Calu3 (cell line): ENCODE measurements at regions of chr14 and their contacts with region 1.

Region 1: DNA sequence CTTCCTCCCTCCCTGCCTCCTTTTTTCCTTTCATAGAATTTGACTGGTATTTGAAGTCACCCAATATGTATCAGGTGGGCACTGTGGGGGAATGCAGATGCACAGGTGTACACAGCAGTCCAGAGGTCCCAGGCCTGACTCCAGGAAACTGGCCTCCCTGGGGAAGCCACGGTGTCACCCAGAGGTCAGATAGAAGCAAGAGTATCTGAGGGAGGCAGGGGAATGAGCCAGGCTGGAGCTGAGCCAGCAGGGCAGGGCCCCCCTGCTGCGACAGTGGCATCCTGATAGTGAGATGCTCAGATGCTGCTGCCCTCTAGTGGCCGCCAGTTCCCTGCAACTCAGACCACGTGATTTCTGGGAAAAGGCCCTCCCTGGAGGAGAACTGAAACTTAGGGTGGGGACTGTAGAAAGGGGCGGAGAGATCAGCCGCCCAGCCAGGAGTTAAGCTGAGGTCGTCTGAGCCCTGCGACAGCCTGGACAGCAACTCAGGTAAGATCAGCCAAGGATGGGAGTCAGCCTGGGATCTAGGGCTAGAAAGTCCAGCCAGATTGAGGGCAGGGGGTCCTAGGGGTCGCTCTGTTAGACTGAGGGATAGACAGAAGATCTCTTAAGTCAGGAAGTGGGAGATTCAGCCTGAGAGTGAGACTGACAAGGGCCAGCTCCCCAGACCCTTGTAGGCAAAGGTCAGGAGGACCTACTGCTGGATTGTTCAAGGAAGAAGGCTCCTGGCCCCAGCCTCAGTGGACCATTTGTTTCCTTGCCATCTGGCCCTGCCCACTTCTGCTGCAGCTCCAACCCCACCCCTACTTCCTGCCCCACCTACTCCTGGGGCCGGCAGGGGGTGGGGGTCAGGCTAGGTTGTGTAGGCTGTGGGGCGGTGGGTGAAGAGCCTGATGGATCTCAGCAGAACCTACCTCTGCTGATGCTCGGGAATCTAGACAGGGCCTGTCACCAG is at the start of gene IRF9:
- DNase-seq: peak; percentile 96
- H3K4me3 Mint-ChIP-seq: peak within 1 kb of the TSS; percentile 76
- H3K27ac Mint-ChIP-seq: peak within 1 kb of the TSS; percentile 86
- H3K4me1 Mint-ChIP-seq: peaks cover 15% of the 10 kb centered on the region
- H3K27me3 Mint-ChIP-seq: no peaks in the 10 kb centered on the region
- CTCF ChIP-seq: peak; percentile 75
- total RNA-seq, gene IRF9: 124 and 184 TPM in 2 replicates

Region 2: DNA sequence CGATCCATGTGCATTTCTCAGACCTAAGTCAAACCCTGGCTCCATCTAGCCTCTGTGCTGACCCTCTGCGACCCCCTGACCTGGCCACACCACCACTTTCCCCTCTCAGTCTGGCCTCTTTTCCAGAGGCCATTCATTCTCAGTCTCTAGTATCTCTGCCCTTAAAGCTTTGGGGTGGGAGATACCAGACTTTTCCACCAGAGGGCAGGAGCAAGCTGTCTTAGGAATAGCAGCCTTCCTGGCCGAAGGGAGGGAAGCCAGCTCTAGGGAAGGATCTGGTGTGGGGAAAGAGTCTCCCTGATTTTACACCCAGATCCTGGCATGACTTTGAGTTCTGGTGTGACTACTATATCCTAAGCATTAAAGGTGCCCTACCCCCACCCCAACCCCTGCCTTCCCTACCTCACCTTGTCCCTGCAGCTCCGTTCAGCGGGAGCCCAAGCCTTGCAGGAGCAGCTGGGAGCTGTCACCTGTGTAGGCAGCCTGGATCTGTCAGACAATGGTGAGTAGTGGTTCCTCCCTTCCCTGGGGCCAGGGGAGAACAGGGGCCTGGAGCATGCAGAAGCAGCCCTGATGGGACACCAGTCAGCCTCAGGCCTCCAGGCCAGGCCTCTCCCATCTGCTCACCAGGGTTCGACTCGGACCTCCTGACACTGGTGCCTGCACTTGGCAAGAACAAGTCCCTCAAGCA is 102.7 kb before region 1 on chr14:
- CTCF ChIA-PET with region 1: interaction called, 12 read pairs
- intact Hi-C with region 1: no loop called
- DNase-seq: peak; percentile 41
- H3K4me3 Mint-ChIP-seq: no peak overlapping the region
- H3K27ac Mint-ChIP-seq: no peak overlapping the region
- H3K4me1 Mint-ChIP-seq: peaks cover 3% of the 10 kb centered on the region
- H3K27me3 Mint-ChIP-seq: peaks cover 68% of the 10 kb centered on the region
- CTCF ChIP-seq: peak; percentile 22

Region 3: DNA sequence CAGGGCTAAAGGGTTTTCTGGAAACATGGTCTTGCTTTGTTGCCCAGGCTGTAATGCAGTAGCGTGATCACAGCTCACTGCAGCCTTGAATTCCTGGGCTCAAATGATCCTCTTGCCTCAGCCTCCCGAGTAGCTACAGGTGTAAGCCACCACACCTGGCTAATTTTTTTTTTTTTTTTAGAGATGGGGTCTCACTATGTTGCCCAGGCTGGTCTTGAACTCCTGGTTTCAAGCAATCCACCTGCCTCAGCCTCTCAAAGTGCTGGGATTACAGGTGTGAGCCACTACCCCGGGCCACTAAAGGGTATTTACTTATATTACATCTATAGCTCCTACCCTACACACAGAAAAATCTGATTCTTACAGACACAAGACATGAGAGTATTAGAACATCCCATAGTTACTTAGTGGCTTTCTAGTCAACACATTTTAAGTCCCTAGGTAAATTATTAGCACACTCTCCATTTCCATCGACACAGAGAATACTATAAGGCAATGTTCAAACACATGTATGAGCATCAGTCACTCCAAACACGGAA is 52.7 kb before region 1 on chr14:
- CTCF ChIA-PET with region 1: interaction called, 14 read pairs
- intact Hi-C with region 1: no loop called
- DNase-seq: no peak
- H3K4me3 Mint-ChIP-seq: no peak overlapping the region
- H3K27ac Mint-ChIP-seq: no peak overlapping the region
- H3K4me1 Mint-ChIP-seq: peaks cover 5% of the 10 kb centered on the region
- H3K27me3 Mint-ChIP-seq: no peaks in the 10 kb centered on the region
- CTCF ChIP-seq: no peak

Region 4: DNA sequence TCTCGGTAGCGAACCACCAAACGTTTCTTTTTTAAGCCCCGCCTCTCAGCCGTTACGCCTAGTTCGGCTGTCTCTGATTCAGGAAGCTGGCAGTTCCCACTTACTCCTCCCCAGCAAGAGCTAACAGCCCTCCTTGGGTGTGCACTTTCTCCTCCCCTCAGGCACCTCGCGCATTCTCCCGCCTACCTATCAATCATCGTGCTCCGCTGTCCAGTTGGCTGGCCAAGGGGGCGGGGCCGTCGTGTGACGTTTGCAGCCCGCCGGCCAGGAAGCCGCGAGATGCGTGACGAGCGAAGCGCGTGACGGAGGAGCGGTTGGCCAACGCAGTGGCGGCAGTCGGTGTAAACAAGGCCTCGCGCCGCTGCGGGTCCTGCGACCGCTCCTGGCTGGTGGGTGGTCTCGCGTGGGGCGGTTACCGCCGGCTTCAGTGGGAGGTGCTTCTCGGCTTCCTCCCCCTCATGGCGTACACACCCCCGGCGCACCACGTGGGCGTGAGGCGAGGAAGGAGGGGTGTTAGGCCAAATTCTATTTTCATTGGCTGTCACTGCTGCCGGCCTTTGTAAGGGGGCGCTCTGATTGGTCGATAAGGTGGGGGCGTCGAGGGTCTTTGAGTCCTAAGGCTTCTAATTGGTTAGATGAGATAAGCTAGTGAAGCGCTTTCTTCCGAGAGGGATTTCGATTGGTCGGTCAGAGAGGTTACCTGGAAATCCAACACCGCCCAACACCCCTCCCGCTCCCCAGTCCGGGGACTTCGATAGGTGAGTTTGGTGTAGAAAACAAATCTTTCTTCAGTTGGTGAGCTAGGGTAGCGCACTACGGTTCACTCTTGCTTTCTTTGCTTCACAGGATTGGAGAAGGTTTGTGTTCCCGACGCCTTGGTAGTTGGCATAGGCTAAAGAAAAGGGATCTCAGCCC is 46.3 kb before region 1 on chr14 and contains the starts of genes DCAF11 and NRL:
- CTCF ChIA-PET with region 1: interaction called, 16 read pairs
- intact Hi-C with region 1: loop called (anchors 2 kb)
- DNase-seq: peak; percentile 98
- H3K4me3 Mint-ChIP-seq: peak within 1 kb of the TSS; percentile 82
- H3K27ac Mint-ChIP-seq: peak within 1 kb of the TSS; percentile 98
- H3K4me1 Mint-ChIP-seq: peaks cover 19% of the 10 kb centered on the region
- H3K27me3 Mint-ChIP-seq: no peaks in the 10 kb centered on the region
- CTCF ChIP-seq: no peak
- total RNA-seq, gene DCAF11: 58.2 and 63.4 TPM in 2 replicates
- total RNA-seq, gene NRL: 1.8 and 2.3 TPM in 2 replicates

Region 5: DNA sequence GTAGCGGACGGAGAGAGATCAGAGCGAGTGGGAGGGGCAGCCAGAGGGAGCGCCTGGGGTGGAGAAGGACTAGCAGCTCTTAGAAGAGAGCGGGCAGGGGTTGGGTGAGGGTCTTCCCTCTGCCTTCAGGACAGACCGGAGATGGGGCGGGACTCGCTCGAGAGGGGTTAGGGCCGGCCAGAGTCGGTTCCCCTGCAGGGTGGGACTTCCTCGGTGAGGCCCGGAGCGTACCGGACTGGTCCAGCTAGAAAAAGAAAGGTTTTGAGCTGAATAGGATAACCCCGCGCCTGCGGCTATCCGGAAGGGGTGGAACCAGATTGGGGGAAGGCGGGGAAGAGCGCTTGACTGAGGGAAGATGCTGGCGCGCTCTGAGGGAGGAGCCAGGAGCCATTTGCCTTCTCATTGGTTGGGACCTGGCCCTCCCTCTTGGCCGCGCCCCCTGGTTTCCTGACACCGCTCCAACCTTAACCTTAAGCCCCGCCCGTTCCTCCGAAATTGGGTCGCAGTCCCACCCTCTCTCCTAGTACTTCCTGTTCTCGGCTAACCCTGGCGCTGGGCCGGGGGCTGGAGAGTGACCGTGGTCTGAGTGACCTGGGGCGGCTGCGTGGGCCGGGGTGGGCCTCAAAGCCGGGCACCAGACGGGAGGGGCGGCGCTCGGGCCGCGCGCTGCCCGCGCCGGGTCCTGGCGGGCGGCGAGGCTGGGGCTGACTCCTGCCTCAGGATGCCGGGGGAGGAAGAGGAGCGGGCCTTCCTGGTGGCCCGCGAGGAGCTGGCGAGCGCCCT is 14.0 kb before region 1 on chr14 and contains the start of gene RNF31:
- CTCF ChIA-PET with region 1: interaction called, 24 read pairs
- intact Hi-C with region 1: loop called (anchors 2 kb)
- DNase-seq: peak; percentile 96
- H3K4me3 Mint-ChIP-seq: peak within 1 kb of the TSS; percentile 89
- H3K27ac Mint-ChIP-seq: peak within 1 kb of the TSS; percentile 77
- H3K4me1 Mint-ChIP-seq: peaks cover 35% of the 10 kb centered on the region
- H3K27me3 Mint-ChIP-seq: no peaks in the 10 kb centered on the region
- CTCF ChIP-seq: no peak
- total RNA-seq, gene RNF31: 95.9 and 103 TPM in 2 replicates